ENCODE measurements at regions of chr7 and their contacts with region 1.

Region 1: GRCh38 chr7:47945261-47946001 is 2.8 kb downstream of the PKD1L1 start:
- DNase-seq: peak; percentile 42 to 83 (median 71)
- ATAC-seq: no peak
- H3K4me3 ChIP-seq: no peak overlapping the region
- H3K4me3 Mint-ChIP-seq: no peak overlapping the region
- H3K27ac ChIP-seq: no peak overlapping the region
- H3K27ac Mint-ChIP-seq: no peak overlapping the region
- H3K4me1 ChIP-seq: no peaks in the 10 kb centered on the region
- H3K4me1 Mint-ChIP-seq: no peaks in the 10 kb centered on the region
- H3K27me3 ChIP-seq: no peaks in the 10 kb centered on the region
- H3K27me3 Mint-ChIP-seq: no peaks in the 10 kb centered on the region
- CTCF ChIP-seq: peak; percentile 82

Region 2: DNA sequence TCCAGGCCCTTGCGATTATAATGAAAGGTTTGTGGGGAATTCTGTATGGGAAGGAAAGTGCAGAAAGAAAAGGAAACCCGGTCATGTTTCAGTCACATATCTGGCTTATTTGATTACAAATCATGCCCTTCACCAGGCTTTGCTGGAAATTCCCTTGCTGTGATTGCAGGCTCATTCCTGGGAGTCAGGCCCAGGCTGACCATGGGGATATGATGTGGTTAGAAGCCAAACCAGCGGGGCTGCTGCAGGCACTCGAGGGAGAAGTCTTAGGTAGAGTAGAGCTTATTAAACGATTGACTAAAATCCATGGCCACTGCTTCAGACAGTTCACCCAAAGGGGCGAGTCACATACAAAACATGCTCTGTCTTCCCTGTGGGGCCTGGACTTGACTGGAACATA is 13.4 kb before region 1 on chr7:
- CTCF ChIA-PET with region 1: interaction called, 15 read pairs
- POLR2A ChIA-PET with region 1: no interaction called
- intact Hi-C with region 1: no loop called
- DNase-seq: no peak
- ATAC-seq: no peak
- H3K4me3 ChIP-seq: no peak overlapping the region
- H3K4me3 Mint-ChIP-seq: no peak overlapping the region
- H3K27ac ChIP-seq: no peak overlapping the region
- H3K27ac Mint-ChIP-seq: no peak overlapping the region
- H3K4me1 ChIP-seq: no peaks in the 10 kb centered on the region
- H3K4me1 Mint-ChIP-seq: no peaks in the 10 kb centered on the region
- H3K27me3 ChIP-seq: no peaks in the 10 kb centered on the region
- H3K27me3 Mint-ChIP-seq: no peaks in the 10 kb centered on the region
- CTCF ChIP-seq: no peak

Region 3: DNA sequence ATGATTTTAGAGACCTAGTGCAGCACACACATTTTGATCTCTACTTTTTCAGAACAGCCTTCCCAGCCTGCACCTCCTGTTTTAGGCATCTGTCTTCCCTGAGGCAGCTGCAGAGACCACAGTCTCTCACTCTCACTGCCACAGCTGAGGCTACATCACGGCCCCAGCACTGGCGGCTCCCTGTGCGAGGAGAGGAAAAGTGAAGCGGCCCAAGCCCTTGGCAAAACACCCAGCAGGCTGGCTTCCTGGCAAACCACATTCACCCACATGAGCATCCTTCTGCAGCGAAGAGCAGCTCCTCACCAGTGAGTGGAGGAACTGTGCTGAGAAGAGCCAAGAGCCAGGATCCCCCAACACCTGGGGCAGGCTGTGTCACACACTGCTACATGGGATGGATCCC is 20.0 kb after region 1 on chr7:
- CTCF ChIA-PET with region 1: interaction called, 10 read pairs
- POLR2A ChIA-PET with region 1: no interaction called
- intact Hi-C with region 1: no loop called
- DNase-seq: no peak
- ATAC-seq: no peak
- H3K4me3 ChIP-seq: no peak overlapping the region
- H3K4me3 Mint-ChIP-seq: no peak overlapping the region
- H3K27ac ChIP-seq: no peak overlapping the region
- H3K27ac Mint-ChIP-seq: peak overlapping the region; percentile 75
- H3K4me1 ChIP-seq: no peaks in the 10 kb centered on the region
- H3K4me1 Mint-ChIP-seq: peaks cover 22% of the 10 kb centered on the region
- H3K27me3 ChIP-seq: no peaks in the 10 kb centered on the region
- H3K27me3 Mint-ChIP-seq: no peaks in the 10 kb centered on the region
- CTCF ChIP-seq: no peak

Region 4: GRCh38 chr7:48154792-48155413 is 209.5 kb after region 1 on chr7:
- CTCF ChIA-PET with region 1: interaction called, 14 read pairs
- POLR2A ChIA-PET with region 1: no interaction called
- intact Hi-C with region 1: loop called in 1 of 2 experiments (anchors 1 kb)
- DNase-seq: peak in 5 of 9 experiments; percentile 7 to 49 (median 33)
- ATAC-seq: no peak
- H3K4me3 ChIP-seq: no peak overlapping the region
- H3K4me3 Mint-ChIP-seq: no peak overlapping the region
- H3K27ac ChIP-seq: no peak overlapping the region
- H3K27ac Mint-ChIP-seq: no peak overlapping the region
- H3K4me1 ChIP-seq: no peaks in the 10 kb centered on the region
- H3K4me1 Mint-ChIP-seq: no peaks in the 10 kb centered on the region
- H3K27me3 ChIP-seq: peaks cover 0 to 4% of the 10 kb centered on the region in 2 experiments
- H3K27me3 Mint-ChIP-seq: peaks cover 7% of the 10 kb centered on the region
- CTCF ChIP-seq: no peak

Region 5: GRCh38 chr7:49166441-49166840 is 1221.0 kb after region 1 on chr7:
- CTCF ChIA-PET with region 1: no interaction called
- POLR2A ChIA-PET with region 1: no interaction called
- intact Hi-C with region 1: loop called in 1 of 2 experiments (anchors 10 kb)
- DNase-seq: no peak
- ATAC-seq: no peak
- H3K4me3 ChIP-seq: no peak overlapping the region
- H3K4me3 Mint-ChIP-seq: no peak overlapping the region
- H3K27ac ChIP-seq: no peak overlapping the region
- H3K27ac Mint-ChIP-seq: no peak overlapping the region
- H3K4me1 ChIP-seq: no peaks in the 10 kb centered on the region
- H3K4me1 Mint-ChIP-seq: no peaks in the 10 kb centered on the region
- H3K27me3 ChIP-seq: no peaks in the 10 kb centered on the region
- H3K27me3 Mint-ChIP-seq: no peaks in the 10 kb centered on the region
- CTCF ChIP-seq: no peak